Endothelial cell of umbilical vein (primary cell): ENCODE measurements at regions of chr4 and their contacts with region 1.

Region 1: DNA sequence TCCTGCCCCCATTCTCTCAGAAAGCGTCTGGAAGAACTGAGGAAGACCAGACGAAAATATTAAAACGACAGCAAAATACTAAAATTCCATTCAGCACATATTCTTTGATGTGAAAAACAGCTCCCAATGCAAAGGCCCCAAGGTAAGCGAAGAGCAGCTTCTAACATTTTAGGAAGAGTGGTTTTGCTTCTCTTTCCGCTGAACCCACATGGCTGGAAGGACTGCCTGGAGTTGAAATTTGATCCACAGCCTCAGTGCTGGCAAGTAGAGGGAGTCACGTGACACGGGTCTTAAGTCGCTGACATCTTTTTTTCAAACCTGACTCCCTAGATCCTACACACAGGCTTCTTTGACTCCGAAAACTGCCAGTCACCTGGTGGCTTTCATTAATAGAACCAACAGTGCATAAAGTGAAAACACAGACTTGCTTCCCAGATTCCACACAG is at the start of gene FAM13A:
- DNase-seq: peak; percentile 92
- H3K4me3 ChIP-seq: peak within 1 kb of the TSS; percentile 31 to 90 (median 85)
- H3K27ac ChIP-seq: peak within 1 kb of the TSS; percentile 66
- H3K4me1 ChIP-seq: peaks cover 25% of the 10 kb centered on the region
- H3K27me3 ChIP-seq: no peaks in the 10 kb centered on the region
- CTCF ChIP-seq: no peak
- POLR2A ChIP-seq: peak; percentile 70
- total RNA-seq, gene FAM13A: 9.4 and 10.5 TPM in 2 replicates

Region 2: DNA sequence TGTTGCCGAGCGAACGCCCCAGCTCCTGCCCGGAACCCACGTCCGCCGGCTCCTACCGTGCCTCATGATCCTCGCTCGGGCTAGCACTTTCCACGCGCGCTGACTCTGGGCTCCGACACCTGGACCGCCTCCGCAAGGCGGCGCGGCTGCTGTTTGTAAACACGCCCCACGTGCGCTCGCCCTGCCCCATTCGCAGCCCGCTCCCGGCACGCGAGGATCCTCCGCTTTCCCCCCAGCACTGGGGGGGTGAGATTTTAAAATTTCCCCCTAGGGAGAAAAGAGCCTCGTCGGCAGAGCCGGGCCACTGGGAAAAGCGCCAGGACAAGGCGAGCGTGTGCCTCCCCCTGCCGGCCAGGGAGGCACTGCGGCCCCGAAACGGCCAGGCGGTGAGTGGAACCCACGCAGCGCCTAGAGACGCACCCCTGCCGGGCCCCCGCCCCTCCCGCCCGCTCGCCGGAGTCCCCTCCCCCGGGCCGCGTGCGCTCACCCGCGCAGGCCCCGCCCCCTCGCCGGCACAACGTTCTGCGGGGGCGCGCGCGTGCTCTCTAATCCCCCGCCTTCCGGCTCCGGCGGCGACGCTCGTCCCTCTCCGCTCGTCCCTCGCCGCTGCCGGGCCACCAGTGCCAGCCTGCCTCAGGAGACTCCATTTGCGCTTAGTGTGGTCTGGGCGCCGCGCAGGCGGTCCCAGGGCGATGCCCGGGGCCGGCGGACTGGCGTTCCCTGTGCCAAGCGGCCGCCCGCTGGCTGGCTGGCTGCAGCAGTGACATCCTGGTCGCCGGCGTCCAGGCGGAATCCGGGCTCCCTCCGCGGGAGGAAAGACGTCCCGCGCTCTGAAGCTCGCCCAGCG is 54.2 kb after region 1 on chr4 and contains the start of gene TIGD2:
- CTCF ChIA-PET with region 1: interaction called, 4 read pairs
- POLR2A ChIA-PET with region 1: no interaction called
- dilution Hi-C with region 1: no loop called
- intact Hi-C with region 1: loop called (anchors 2 kb)
- DNase-seq: peak; percentile 84
- H3K4me3 ChIP-seq: peak within 1 kb of the TSS; percentile 58 to 82 (median 59)
- H3K27ac ChIP-seq: peak within 1 kb of the TSS; percentile 40
- H3K4me1 ChIP-seq: peaks cover 13% of the 10 kb centered on the region
- H3K27me3 ChIP-seq: peaks cover 12 to 15% of the 10 kb centered on the region in 2 experiments
- CTCF ChIP-seq: peak; percentile 64 to 85
- POLR2A ChIP-seq: peak; percentile 73
- total RNA-seq, gene TIGD2: 4.2 and 5.0 TPM in 2 replicates

Region 3: DNA sequence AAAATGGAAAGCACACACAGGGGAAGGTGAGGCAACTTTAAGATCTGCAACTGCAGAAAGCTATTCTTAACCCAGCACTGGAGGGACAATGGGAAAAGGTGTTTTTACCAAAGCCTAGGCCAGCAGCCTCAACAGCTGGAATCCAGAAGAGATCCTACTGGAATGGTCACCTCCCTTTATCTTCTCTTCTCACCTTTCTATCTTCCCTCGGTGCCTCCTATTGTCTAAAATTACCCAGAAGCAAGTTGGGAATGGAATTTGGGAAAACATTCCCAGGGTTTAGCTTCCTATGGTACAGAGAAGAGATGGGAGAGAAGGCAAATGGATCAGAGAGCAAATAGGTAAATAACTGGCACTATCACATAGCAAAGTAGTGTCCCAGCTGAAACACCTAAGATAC is 127.4 kb after region 1 on chr4:
- CTCF ChIA-PET with region 1: no interaction called
- POLR2A ChIA-PET with region 1: no interaction called
- dilution Hi-C with region 1: no loop called
- intact Hi-C with region 1: no loop called
- DNase-seq: no peak
- H3K4me3 ChIP-seq: no peak overlapping the region
- H3K27ac ChIP-seq: no peak overlapping the region
- H3K4me1 ChIP-seq: no peaks in the 10 kb centered on the region
- H3K27me3 ChIP-seq: peaks cover 6 to 7% of the 10 kb centered on the region in 2 experiments
- CTCF ChIP-seq: no peak
- POLR2A ChIP-seq: no peak